Naive thymus-derived CD4-positive, alpha-beta T cell (primary cell): ENCODE measurements at regions of chr1 and their contacts with region 1.

Region 1: DNA sequence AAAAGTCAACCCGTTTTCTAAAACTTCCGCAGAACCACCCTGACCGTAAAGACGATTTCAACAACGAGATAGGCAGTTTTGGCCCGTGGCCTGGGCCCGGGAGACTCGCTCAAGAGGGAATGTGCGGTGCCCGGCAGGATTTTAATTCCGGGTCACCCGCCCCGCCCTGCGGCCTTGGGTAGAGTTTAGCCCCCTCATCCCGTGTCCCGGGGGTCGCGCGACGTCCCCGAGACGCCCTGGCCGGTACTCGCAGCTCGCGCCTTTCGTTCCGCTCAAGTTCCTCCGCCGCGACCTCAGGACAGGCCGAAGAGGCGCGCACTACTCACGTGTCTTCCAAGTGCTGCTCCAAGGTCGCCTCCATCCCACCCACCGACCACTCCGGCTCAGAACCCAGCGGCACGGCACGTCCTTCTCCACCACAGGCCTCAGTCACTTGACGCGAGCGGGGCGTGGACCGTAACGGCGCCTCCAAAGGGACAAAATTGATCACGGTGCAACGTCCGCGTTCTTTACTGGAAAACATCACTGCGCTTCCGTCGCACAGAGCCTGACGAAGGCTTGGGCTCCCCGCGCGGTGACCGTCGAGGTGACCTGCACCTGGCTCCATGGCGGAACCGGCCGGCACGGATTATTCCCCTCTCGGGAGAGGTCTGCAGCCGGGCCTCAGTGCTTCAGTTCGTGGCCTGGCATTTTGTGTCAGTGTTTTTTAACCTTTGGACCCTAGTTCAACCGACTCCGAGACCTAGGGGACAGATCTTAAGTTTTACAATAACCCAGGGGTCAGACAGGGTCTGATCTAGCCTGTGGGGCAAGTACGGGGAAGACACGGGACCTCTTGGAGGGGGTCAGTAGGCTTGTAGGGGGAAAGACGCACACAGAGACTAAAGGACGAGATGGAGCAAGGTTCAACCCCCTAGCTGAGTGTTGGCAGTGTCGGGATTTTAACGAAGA is at the start of gene LAMTOR5:
- DNase-seq: peak; percentile 77 to 91 (median 89)
- ATAC-seq: peak; percentile 98
- H3K4me3 ChIP-seq: peak within 1 kb of the TSS; percentile 95
- H3K4me3 Mint-ChIP-seq: peak within 1 kb of the TSS; percentile 88 to 100 (median 99)
- H3K27ac ChIP-seq: peak within 1 kb of the TSS; percentile 92
- H3K27ac Mint-ChIP-seq: peak within 1 kb of the TSS; percentile 96 to 100 (median 99)
- H3K4me1 ChIP-seq: peaks cover 19% of the 10 kb centered on the region in 2 donors
- H3K4me1 Mint-ChIP-seq: peaks cover 9 to 39% (median 27%) of the 10 kb centered on the region in 7 donors
- H3K27me3 ChIP-seq: no peaks in the 10 kb centered on the region
- H3K27me3 Mint-ChIP-seq: no peaks in the 10 kb centered on the region
- total RNA-seq, gene LAMTOR5: 63.3 to 146 (median 69.4) TPM

Region 2: DNA sequence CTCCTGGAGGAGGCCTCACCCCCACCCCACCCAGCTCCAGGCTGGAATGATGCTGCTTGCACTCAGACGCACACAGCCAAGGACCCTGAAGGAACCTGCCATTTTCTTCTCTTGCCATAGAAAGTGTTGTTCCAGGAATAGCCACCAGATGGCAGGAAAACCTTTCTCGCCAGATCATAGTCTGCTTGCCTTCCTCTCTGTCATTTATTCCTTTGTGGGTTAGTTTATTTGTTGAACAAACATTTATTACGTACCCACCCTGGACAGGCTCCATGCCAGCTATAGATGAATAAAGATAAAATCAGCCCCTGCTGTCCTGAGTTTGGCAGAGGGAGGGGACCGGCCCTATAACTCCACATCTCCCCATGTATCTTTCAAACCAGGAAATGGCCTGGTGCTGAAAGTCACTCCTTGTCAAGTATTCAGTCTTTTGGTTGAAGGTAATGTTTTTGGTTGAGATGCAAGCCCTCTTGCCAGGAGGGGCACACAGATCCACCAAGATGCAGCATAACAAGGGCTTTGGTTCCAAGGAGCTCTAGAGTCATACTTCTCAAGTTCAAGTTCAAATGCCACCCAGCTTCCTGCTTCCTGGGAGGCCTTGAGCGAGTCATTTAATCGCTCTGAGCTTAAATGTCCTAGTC is 204.4 kb before region 1 on chr1:
- CTCF ChIA-PET with region 1: interaction called, 8 read pairs
- POLR2A ChIA-PET with region 1: interaction called, 4 read pairs
- intact Hi-C with region 1: loop called in 1 of 2 experiments (anchors 2 kb)
- DNase-seq: peak; percentile 31 to 83 (median 74)
- ATAC-seq: peak; percentile 71
- H3K4me3 ChIP-seq: no peak overlapping the region
- H3K4me3 Mint-ChIP-seq: peak overlapping the region in 5 of 10 donors; percentile 1 to 26 (median 18)
- H3K27ac ChIP-seq: no peak overlapping the region
- H3K27ac Mint-ChIP-seq: peak overlapping the region; percentile 53 to 92 (median 87)
- H3K4me1 ChIP-seq: peaks cover 8 to 20% of the 10 kb centered on the region in 2 donors
- H3K4me1 Mint-ChIP-seq: peaks cover 13 to 32% (median 23%) of the 10 kb centered on the region in 7 donors
- H3K27me3 ChIP-seq: no peaks in the 10 kb centered on the region
- H3K27me3 Mint-ChIP-seq: no peaks in the 10 kb centered on the region